Right ventricle myocardium inferior (tissue), 1 donor: ENCODE measurements at regions of chr1 and their contacts with region 1.

Region 1: DNA sequence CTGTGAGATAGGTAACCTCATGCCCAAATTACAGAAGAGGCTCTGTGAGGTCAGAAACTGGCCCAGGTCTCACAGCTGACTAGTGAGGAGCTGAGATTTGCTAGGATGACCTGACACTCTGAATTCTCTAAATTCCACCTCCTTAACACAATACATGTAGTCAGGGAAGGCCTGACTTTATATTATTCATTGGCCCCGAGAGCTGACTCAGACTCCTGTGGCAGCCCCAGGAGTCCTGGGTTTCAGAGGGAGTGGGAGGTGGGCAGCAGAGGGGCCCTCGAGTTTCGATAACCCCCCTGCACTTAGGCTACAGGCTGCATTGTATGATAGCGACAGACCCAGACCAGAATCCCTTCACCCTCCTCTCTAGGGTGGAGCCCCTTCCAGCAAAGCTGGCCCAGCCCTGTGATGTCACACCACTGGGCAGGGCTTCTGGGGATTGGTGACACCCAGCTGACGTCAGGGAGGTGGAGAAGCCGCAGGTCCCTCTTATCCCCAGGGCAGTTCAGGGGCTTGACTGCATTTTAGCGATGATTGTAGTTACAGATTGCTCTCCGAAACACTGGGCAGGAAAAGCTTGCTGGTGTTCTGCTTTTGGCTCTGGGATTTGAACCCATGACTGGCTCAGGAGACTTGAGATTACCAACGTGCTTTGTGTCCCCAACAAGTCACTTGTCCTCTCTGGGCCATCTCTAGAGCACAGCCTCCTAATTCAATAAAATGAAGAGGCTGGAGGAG is 17.0 kb upstream of the GPR37L1 start:
- DNase-seq: no peak
- ATAC-seq: no peak

Region 2: DNA sequence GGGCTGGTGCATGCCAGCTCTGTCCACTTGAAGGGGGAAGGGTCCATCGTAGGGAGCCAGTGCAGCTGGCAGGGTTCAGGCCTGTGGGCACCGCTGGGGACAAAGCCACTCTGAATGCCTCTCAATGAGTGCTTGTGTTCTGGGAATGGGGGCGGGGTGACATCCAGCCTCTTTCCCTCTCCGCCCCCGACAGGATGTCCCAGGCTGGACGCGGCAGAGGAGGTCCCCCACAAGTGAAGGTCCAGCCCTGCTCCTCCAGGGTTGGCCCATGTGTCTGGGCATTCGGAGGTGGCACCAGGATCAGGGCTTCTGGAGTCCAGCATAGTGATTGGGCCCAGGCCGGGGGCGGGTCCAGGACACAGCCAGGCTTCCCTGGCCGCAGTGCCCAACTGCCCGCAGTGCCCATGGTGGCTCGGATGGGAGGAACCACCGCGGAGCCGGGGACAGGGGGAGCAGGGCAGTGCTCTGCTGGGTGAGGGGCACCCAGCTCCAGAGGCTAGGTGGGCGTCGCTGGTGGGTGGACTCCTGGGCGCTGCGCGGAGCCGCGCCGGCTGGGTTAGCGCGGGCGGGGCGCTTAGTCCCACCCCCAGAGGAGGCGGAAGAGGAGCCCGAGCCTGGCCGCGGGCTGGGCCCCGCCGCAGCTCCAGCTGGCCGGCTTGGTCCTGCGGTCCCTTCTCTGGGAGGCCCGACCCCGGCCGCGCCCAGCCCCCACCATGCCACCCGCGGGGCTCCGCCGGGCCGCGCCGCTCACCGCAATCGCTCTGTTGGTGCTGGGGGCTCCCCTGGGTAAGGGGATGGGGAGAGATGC is 217.2 kb before region 1 on chr1 and contains the start of gene SHISA4:
- intact Hi-C with region 1: loop called (anchors 5 kb)
- DNase-seq: peak; percentile 88
- ATAC-seq: peak; percentile 84
- total RNA-seq, gene SHISA4: 159 TPM

Region 3: GRCh38 chr1:201937624-201938213 is 168.0 kb before region 1 on chr1:
- intact Hi-C with region 1: no loop called
- DNase-seq: no peak
- ATAC-seq: no peak

Region 4: DNA sequence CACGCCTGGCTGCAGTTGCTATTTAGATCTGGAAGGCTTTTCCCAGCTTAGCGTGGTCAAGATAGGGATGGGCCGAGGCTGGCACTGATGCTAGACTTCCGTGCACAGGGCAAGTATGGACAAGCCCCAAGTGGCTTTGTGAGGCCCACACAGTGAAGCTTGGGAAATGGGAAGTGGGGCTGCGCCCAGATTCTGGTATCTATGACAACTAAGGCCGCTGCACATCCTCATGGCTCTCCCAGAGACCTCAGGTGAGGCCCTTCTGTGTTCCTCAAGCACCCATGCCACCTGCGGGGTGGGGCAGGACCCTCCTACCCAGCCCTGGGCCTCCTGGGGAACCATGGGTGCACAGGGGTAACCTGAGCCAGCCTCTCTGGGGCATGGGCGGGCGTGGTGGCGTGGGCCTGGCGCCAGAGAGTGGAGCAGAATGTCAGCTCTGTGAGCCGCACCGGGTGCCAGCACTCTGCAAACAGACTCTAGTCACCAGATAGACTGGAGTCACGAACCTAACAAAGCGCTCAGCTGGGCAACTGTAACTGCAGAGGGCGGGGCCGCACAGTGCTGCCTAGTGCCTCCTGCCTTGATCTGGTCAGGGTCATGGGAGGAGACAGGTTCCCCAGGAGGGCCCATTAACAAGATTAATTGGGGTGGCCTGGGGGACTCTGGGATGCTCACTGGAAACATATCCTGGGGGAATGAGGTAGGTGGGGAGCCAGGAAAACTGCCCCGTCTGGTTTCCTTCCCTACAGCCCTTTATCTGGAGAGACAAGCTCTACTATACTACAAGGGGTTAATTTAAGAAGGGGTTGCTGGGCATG is 48.9 kb before region 1 on chr1:
- intact Hi-C with region 1: loop called (anchors 2 kb)
- DNase-seq: peak; percentile 76
- ATAC-seq: peak; percentile 91

Region 5: GRCh38 chr1:202122639-202123335 is 17.1 kb after region 1 on chr1 and contains the start of gene GPR37L1:
- intact Hi-C with region 1: no loop called
- DNase-seq: no peak
- ATAC-seq: peak; percentile 65
- total RNA-seq, gene GPR37L1: 0.08 TPM

Region 6: DNA sequence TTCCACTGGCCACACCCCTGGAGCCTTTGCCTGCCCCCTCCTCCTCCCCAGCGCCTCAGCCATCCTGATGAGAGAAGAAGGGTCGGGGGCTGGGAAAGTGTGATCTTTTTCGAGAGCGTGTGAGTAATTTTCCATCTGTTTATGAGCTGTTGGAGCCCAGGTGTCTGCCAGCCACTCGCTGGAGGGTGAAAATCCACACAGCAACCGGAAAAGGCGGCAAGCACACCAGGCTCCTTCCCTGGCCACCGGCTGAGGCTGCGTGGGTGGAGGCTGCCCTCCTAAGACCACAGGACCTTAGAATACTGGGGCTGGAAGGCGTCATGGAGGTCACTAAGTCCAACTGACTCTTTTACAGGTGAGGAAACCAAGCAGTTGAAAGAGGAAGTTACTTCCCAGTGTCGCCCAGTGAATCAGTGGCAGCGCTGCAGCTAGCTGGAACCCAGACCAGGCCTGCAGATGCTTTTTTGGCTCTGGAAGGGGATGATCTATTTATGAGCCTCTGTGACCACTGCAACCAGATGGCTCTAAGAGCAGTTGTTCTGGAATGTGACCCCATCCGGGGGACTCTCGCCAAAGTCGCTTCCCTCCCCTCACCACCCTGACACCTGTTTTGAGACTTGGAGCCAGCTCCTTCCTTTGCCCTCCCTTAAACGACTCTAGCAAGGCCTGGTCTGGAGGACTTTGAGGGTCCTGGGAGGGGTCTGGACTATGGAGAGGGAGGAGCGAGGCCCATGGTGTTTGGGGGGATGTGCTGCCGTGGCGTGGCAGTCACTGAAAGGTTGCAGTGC is 142.4 kb after region 1 on chr1:
- intact Hi-C with region 1: no loop called
- DNase-seq: no peak
- ATAC-seq: no peak